ENCODE measurements at regions of chr2 and their contacts with region 1.

Region 1: GRCh38 chr2:59167514-59167913 is 926.4 kb upstream of the FANCL start:
- DNase-seq: no peak
- H3K4me3 ChIP-seq: no peak overlapping the region
- H3K27ac ChIP-seq: no peak overlapping the region
- H3K27me3 ChIP-seq: no peaks in the 10 kb centered on the region
- CTCF ChIP-seq: no peak

Region 2: DNA sequence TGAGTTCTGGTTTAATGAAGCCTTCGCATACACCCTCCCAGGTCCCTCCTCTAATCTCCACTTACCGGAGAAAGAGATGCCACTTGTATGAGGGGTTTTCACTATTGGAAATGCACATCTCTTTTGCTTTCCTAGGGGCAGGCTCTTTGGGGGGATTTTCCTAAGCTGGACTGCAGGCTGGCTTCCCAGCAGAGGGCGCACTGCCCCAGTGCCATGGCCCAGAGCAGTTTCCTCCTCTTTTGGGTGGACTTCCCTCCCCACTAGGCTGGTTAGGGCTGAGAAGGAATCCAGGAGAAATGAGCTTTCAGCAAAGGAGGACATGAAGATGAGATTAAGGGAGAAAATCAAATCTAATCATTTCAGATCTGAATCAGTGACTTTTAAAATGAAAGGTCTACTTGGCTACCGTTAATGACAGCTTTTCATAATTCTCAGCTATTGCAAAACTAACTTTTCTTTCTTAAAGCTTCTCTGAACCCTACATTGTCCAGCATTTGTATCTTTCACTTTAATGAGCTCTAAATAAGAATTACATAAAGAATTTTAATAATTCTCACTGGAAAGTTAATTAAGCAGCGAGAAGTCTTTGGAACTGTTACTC is 142.3 kb before region 1 on chr2:
- intact Hi-C with region 1: no loop called
- DNase-seq: peak in 2 of 10 donors; percentile 10 to 25
- H3K4me3 ChIP-seq: no peak overlapping the region
- H3K27ac ChIP-seq: no peak overlapping the region
- H3K27me3 ChIP-seq: peaks cover 0 to 4% (median 0%) of the 10 kb centered on the region in 45 donors
- CTCF ChIP-seq: peak in 55 of 56 donors; percentile 19 to 75 (median 55)

Region 3: GRCh38 chr2:59333007-59333406 is 165.5 kb after region 1 on chr2:
- intact Hi-C with region 1: no loop called
- DNase-seq: no peak
- H3K4me3 ChIP-seq: no peak overlapping the region
- H3K27ac ChIP-seq: no peak overlapping the region
- H3K27me3 ChIP-seq: no peaks in the 10 kb centered on the region
- CTCF ChIP-seq: no peak

Region 4: DNA sequence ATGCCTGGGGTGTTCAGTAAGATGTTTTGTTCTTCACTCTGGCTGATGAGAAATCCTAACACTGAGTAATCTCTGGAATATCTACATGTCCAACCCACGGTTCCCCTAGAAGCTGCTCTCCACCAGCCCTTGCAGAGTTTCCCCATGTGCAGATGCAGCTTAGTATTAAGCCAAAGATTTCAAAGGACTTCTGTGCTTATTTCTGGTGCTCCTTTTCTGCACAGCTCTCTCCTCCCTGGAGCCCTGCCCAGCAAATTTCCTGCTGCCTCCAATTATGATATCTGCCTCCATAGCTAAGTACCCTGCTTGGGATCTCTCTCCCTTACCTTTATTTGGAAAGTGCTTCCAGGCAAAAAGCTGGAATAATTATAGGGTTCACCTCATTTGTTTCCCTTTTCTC is 436.6 kb after region 1 on chr2:
- intact Hi-C with region 1: loop called in 1 of 2 experiments (anchors 5 kb)
- DNase-seq: peak in 5 of 10 donors; percentile 8 to 58 (median 47)
- H3K4me3 ChIP-seq: no peak overlapping the region
- H3K27ac ChIP-seq: no peak overlapping the region
- H3K27me3 ChIP-seq: no peaks in the 10 kb centered on the region
- CTCF ChIP-seq: no peak